Activated naive CD4-positive, alpha-beta T cell treated with anti-CD3 and anti-CD28 coated beads for 36 hours (primary cell): ENCODE measurements at regions of chr3 and their contacts with region 1.

Region 1: GRCh38 chr3:112333002-112333380 is at the start of gene CD200:
- DNase-seq: peak; percentile 75
- H3K4me3 Mint-ChIP-seq: peak within 1 kb of the TSS; percentile 94
- H3K27ac Mint-ChIP-seq: peak within 1 kb of the TSS; percentile 99
- H3K4me1 Mint-ChIP-seq: peaks cover 39% of the 10 kb centered on the region
- H3K27me3 Mint-ChIP-seq: no peaks in the 10 kb centered on the region
- total RNA-seq, gene CD200: 50.0 to 53.6 TPM

Region 2: GRCh38 chr3:111604119-111604518 is 728.9 kb before region 1 on chr3:
- CTCF ChIA-PET with region 1: no interaction called
- intact Hi-C with region 1: loop called (anchors 5 kb)
- DNase-seq: peak; percentile 70
- H3K4me3 Mint-ChIP-seq: peak overlapping the region; percentile 53
- H3K27ac Mint-ChIP-seq: peak overlapping the region; percentile 97
- H3K4me1 Mint-ChIP-seq: peaks cover 87% of the 10 kb centered on the region
- H3K27me3 Mint-ChIP-seq: no peaks in the 10 kb centered on the region

Region 3: DNA sequence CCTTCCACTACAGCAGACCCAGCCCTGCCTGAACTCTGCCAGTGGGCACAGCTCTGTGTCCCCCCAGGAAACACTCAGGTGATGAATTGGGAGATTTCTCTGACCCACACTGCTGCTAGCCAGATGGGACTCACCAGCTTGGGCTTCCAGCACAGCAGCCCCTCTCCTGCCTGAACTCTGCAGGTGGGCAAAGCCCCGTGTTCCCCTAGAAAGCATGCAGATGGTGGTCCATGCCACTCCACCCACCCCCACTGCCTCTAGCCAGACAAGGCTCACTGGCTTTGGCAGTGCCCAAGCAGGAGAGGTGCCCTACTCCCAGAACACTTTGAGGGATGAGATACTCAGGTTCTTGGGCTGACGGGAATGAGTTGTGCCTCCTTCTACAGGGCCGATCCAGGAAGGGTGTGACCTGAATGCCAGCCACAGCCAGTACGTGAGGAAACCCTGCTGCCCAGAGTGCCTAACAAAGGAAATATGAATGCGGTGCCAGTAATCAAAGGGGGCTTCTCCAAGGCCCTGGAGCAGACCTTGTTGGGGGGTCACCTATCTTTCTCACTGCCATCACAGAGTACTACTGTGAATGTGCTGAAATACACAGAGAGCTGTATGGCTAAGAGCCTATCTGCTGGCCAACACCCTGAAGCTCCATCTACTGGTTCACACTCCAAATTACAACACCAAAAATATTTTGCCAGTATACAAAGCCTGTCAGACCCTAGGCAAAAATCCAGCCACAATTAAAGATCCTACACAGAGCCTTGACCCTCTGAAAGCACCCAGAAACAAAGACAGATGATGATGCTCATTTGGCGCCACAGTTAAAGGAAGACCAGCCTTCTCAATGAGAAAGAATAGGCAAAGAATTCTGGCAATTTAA is 104.4 kb after region 1 on chr3:
- CTCF ChIA-PET with region 1: interaction called, 41 read pairs
- intact Hi-C with region 1: loop called (anchors 1 kb)
- DNase-seq: peak; percentile 20
- H3K4me3 Mint-ChIP-seq: no peak overlapping the region
- H3K27ac Mint-ChIP-seq: peak overlapping the region; percentile 62
- H3K4me1 Mint-ChIP-seq: peaks cover 52% of the 10 kb centered on the region
- H3K27me3 Mint-ChIP-seq: no peaks in the 10 kb centered on the region

Region 4: GRCh38 chr3:112498914-112499711 is 166.1 kb after region 1 on chr3 and contains the start of gene BTLA:
- CTCF ChIA-PET with region 1: interaction called, 33 read pairs
- intact Hi-C with region 1: loop called (anchors 1 kb)
- DNase-seq: peak; percentile 71
- H3K4me3 Mint-ChIP-seq: peak within 1 kb of the TSS; percentile 100
- H3K27ac Mint-ChIP-seq: peak within 1 kb of the TSS; percentile 100
- H3K4me1 Mint-ChIP-seq: peaks cover 51% of the 10 kb centered on the region
- H3K27me3 Mint-ChIP-seq: no peaks in the 10 kb centered on the region
- total RNA-seq, gene BTLA: 70.6 to 73.4 TPM

Region 5: GRCh38 chr3:112979240-112979832 is 646.3 kb after region 1 on chr3:
- CTCF ChIA-PET with region 1: no interaction called
- intact Hi-C with region 1: loop called (anchors 10 kb)
- DNase-seq: no peak
- H3K4me3 Mint-ChIP-seq: no peak overlapping the region
- H3K27ac Mint-ChIP-seq: no peak overlapping the region
- H3K4me1 Mint-ChIP-seq: peaks cover 64% of the 10 kb centered on the region
- H3K27me3 Mint-ChIP-seq: no peaks in the 10 kb centered on the region

Region 6: GRCh38 chr3:113019182-113020137 is 686.5 kb after region 1 on chr3:
- CTCF ChIA-PET with region 1: no interaction called
- intact Hi-C with region 1: loop called (anchors 5 kb)
- DNase-seq: peak; percentile 94
- H3K4me3 Mint-ChIP-seq: peak overlapping the region; percentile 94
- H3K27ac Mint-ChIP-seq: peak overlapping the region; percentile 99
- H3K4me1 Mint-ChIP-seq: peaks cover 64% of the 10 kb centered on the region
- H3K27me3 Mint-ChIP-seq: no peaks in the 10 kb centered on the region